B cell (primary cell): ENCODE measurements at regions of chr12 and their contacts with region 1.

Region 1: DNA sequence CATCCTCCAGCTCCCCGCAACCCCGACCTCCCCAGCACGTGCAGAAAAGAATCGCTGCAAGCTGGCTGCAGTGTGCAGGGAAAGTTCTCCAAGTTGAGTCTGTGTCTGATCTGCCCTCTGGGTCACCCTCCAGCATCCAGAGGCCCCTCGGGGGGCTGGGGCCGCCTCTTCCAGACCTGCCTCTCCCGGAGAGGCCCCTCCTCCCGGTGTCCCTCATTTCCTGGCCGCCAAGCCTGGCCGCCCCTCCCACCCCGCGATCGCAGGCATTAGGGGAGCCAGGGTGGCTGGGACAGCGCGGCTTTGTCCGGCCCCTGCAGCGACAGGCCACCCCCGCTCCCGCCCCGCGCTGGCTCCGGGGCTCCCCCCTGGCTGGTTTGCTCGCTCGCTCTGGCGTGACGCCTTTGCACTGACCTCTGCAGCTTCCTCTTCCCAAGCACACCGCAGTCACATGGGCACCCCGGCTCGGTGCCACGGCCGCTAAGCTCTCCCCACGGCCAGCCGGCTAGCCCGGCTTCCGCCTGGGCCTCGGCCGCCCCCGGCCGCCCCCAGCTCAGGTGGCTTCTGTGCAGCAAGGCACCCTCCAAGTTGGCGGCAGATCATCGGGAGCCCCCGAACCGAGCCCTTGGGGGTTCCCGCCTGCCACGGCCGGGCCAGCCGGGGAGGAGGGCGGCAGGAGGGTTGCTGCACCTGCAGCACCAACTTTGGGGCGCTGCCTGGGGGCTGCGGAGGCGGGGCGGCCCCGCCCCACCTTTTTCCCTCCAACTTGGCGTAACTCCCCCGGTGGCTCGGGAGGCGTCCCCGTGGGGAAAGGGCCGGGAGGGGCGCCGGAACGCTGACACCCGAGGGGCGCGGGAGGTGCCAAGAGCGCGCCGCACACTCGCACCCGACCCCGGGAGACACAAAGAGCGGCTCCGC is 43.7 kb downstream of the KDM2B start:
- DNase-seq: peak; percentile 92
- ATAC-seq: peak; percentile 49
- H3K4me3 ChIP-seq: peak overlapping the region; percentile 8 to 85 (median 66)
- H3K4me3 Mint-ChIP-seq: peak overlapping the region; percentile 94
- H3K27ac ChIP-seq: peak overlapping the region; percentile 92 to 97
- H3K27ac Mint-ChIP-seq: peak overlapping the region; percentile 93
- H3K4me1 ChIP-seq: peaks cover 50 to 56% of the 10 kb centered on the region in 2 donors
- H3K4me1 Mint-ChIP-seq: peaks cover 53% of the 10 kb centered on the region
- H3K27me3 ChIP-seq: no peaks in the 10 kb centered on the region
- H3K27me3 Mint-ChIP-seq: no peaks in the 10 kb centered on the region
- CTCF ChIP-seq: no peak

Region 2: DNA sequence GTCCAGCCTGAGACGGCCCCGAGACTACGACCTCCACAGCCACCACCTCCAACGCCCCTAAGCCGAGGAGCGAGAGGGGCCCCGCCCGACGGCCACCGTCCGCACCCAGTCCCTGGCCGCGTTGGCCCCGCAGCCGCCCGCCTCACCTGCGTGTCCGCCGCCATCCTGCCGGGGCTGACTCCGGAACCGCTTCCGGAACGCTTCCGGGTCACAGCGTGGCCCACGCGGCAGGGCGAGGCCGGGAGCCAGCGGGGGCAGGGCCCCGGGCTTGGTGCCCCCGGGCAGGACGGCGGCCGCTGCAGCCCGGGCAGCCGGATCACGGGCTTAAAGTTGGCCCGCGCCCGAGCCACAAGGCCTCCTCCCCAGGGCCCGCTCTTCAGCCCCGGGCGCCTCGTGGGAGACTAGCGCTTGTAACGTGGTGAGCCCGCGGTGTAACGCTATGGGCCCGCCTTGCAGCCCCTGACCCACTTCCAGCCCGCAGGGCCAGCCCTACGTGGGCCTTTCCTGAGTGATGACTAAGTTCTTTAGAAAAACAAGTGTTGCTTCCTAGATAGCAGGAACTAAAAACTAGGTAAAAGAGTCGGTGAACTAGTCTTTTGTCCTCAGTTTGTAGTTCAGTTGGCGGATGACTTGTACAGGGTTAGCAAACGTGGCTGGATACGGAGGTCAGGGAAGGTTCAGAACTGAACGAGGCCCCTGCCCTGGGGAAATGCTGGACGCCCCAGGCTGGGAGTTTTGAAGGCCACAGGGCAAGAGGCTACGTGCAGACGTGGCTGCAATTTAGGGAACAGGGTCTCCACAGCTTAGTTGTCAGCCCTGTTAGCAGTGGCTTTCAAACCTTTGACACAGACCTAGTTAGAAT is 1342.4 kb before region 1 on chr12 and contains the start of gene GCN1:
- CTCF ChIA-PET with region 1: no interaction called
- POLR2A ChIA-PET with region 1: interaction called, 11 read pairs
- intact Hi-C with region 1: no loop called
- DNase-seq: peak; percentile 89
- ATAC-seq: peak; percentile 96
- H3K4me3 ChIP-seq: peak within 1 kb of the TSS; percentile 74 to 89 (median 78)
- H3K4me3 Mint-ChIP-seq: peak within 1 kb of the TSS; percentile 90
- H3K27ac ChIP-seq: peak within 1 kb of the TSS; percentile 48 to 85
- H3K27ac Mint-ChIP-seq: peak within 1 kb of the TSS; percentile 89
- H3K4me1 ChIP-seq: peaks cover 24 to 35% of the 10 kb centered on the region in 2 donors
- H3K4me1 Mint-ChIP-seq: peaks cover 28% of the 10 kb centered on the region
- H3K27me3 ChIP-seq: no peaks in the 10 kb centered on the region
- H3K27me3 Mint-ChIP-seq: no peaks in the 10 kb centered on the region
- CTCF ChIP-seq: no peak
- total RNA-seq, gene GCN1: 127 and 160 TPM in 2 replicates

Region 3: DNA sequence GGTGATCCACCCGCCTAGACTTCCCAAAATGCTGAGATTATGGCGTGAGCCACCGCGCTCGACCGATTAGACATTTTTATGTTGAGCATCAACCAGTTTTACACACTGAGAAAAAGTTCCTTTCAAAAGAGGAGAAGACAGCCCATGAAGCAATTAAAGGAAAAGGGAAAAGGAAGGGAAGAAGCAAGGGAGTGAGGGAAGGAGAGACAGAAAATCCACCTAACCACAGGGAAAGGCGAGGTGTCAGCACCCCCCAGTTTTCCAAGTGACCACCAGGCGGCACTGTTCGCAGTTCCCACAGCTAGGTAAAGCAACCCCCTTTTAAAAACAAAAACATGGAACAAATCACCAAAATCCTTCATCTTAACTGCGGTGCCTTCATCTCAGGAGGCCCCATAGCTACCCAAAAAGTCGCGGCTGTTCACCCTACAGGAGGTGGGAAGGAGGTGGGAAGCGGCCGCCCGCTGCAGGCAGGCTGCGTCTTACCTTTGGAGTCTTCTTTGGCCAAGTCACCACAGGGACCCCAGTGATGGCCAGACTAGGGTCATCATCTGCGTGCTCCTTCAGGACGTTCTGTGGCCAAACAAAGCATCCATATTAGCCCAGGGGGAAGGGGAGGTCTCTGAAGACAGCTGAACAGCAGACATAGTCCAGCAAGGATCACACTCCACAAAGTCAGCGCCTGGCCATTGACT is 42.9 kb before region 1 on chr12:
- CTCF ChIA-PET with region 1: interaction called, 29 read pairs
- POLR2A ChIA-PET with region 1: interaction called, 6 read pairs
- intact Hi-C with region 1: no loop called
- DNase-seq: peak; percentile 74
- ATAC-seq: peak; percentile 54
- H3K4me3 ChIP-seq: no peak overlapping the region
- H3K4me3 Mint-ChIP-seq: no peak overlapping the region
- H3K27ac ChIP-seq: no peak overlapping the region
- H3K27ac Mint-ChIP-seq: peak overlapping the region; percentile 60
- H3K4me1 ChIP-seq: peaks cover 23 to 42% of the 10 kb centered on the region in 2 donors
- H3K4me1 Mint-ChIP-seq: peaks cover 31% of the 10 kb centered on the region
- H3K27me3 ChIP-seq: no peaks in the 10 kb centered on the region
- H3K27me3 Mint-ChIP-seq: no peaks in the 10 kb centered on the region
- CTCF ChIP-seq: peak; percentile 85

Region 4: GRCh38 chr12:121513464-121514183 is 23.5 kb before region 1 on chr12:
- CTCF ChIA-PET with region 1: interaction called, 3 read pairs
- POLR2A ChIA-PET with region 1: interaction called, 14 read pairs
- intact Hi-C with region 1: loop called (anchors 1 kb)
- DNase-seq: no peak
- ATAC-seq: peak; percentile 63
- H3K4me3 ChIP-seq: peak overlapping the region in 4 of 5 experiments; percentile 24 to 49 (median 37)
- H3K4me3 Mint-ChIP-seq: peak overlapping the region; percentile 64
- H3K27ac ChIP-seq: peak overlapping the region; percentile 94
- H3K27ac Mint-ChIP-seq: peak overlapping the region; percentile 91
- H3K4me1 ChIP-seq: peaks cover 14 to 20% of the 10 kb centered on the region in 2 donors
- H3K4me1 Mint-ChIP-seq: peaks cover 20% of the 10 kb centered on the region
- H3K27me3 ChIP-seq: no peaks in the 10 kb centered on the region
- H3K27me3 Mint-ChIP-seq: no peaks in the 10 kb centered on the region
- CTCF ChIP-seq: no peak

Region 5: GRCh38 chr12:121560392-121561008 is 23.3 kb after region 1 on chr12:
- CTCF ChIA-PET with region 1: no interaction called
- POLR2A ChIA-PET with region 1: interaction called, 3 read pairs
- intact Hi-C with region 1: loop called (anchors 2 kb)
- DNase-seq: peak; percentile 90
- ATAC-seq: peak; percentile 78
- H3K4me3 ChIP-seq: no peak overlapping the region
- H3K4me3 Mint-ChIP-seq: peak overlapping the region; percentile 53
- H3K27ac ChIP-seq: peak overlapping the region; percentile 58
- H3K27ac Mint-ChIP-seq: peak overlapping the region; percentile 91
- H3K4me1 ChIP-seq: peaks cover 29 to 48% of the 10 kb centered on the region in 2 donors
- H3K4me1 Mint-ChIP-seq: peaks cover 40% of the 10 kb centered on the region
- H3K27me3 ChIP-seq: no peaks in the 10 kb centered on the region
- H3K27me3 Mint-ChIP-seq: no peaks in the 10 kb centered on the region
- CTCF ChIP-seq: no peak

Region 6: GRCh38 chr12:121590476-121591143 is 53.5 kb after region 1 on chr12:
- CTCF ChIA-PET with region 1: interaction called, 11 read pairs
- POLR2A ChIA-PET with region 1: interaction called, 5 read pairs
- intact Hi-C with region 1: loop called (anchors 1 kb)
- DNase-seq: peak; percentile 82
- ATAC-seq: peak; percentile 67
- H3K4me3 ChIP-seq: peak overlapping the region; percentile 15 to 61 (median 47)
- H3K4me3 Mint-ChIP-seq: peak overlapping the region; percentile 92
- H3K27ac ChIP-seq: peak overlapping the region; percentile 96 to 99
- H3K27ac Mint-ChIP-seq: peak overlapping the region; percentile 100
- H3K4me1 ChIP-seq: peaks cover 26 to 37% of the 10 kb centered on the region in 2 donors
- H3K4me1 Mint-ChIP-seq: peaks cover 34% of the 10 kb centered on the region
- H3K27me3 ChIP-seq: no peaks in the 10 kb centered on the region
- H3K27me3 Mint-ChIP-seq: no peaks in the 10 kb centered on the region
- CTCF ChIP-seq: no peak

Region 7: DNA sequence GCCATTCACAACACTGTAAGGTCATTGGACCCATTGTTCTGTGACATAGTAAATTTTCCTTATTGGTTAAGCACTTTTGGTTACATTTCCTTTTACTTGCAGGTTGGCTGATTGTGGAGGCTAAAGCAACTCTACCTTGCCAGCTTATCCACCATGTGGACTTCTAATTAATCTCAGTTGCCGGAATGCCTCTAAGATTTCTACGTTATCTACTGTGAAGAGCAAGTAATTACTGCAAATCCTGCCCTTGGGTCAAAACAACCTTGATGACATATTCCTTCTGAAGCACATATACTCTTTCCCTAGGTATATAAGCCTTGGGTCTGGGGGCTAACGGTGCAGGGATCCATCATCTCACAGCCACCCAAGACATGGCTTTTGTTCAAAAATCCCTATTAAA is 151.8 kb after region 1 on chr12:
- CTCF ChIA-PET with region 1: no interaction called
- POLR2A ChIA-PET with region 1: interaction called, 9 read pairs
- intact Hi-C with region 1: loop called (anchors 5 kb)
- DNase-seq: no peak
- ATAC-seq: no peak
- H3K4me3 ChIP-seq: no peak overlapping the region
- H3K4me3 Mint-ChIP-seq: no peak overlapping the region
- H3K27ac ChIP-seq: no peak overlapping the region
- H3K27ac Mint-ChIP-seq: peak overlapping the region; percentile 10
- H3K4me1 ChIP-seq: peaks cover 4 to 16% of the 10 kb centered on the region in 2 donors
- H3K4me1 Mint-ChIP-seq: peaks cover 8% of the 10 kb centered on the region
- H3K27me3 ChIP-seq: no peaks in the 10 kb centered on the region
- H3K27me3 Mint-ChIP-seq: no peaks in the 10 kb centered on the region
- CTCF ChIP-seq: no peak